ENCODE measurements at regions of chr12 and their contacts with region 1.

Region 1: GRCh38 chr12:120457133-120457532 is 10.9 kb downstream of the GATC start:
- DNase-seq: no peak
- H3K4me3 ChIP-seq: no peak overlapping the region
- CTCF ChIP-seq: peak; percentile 19

Region 2: GRCh38 chr12:120381752-120382419 is 75.2 kb before region 1 on chr12:
- CTCF ChIA-PET with region 1: no interaction called
- POLR2A ChIA-PET with region 1: no interaction called
- DNase-seq: no peak
- H3K4me3 ChIP-seq: no peak overlapping the region
- CTCF ChIP-seq: no peak

Region 3: DNA sequence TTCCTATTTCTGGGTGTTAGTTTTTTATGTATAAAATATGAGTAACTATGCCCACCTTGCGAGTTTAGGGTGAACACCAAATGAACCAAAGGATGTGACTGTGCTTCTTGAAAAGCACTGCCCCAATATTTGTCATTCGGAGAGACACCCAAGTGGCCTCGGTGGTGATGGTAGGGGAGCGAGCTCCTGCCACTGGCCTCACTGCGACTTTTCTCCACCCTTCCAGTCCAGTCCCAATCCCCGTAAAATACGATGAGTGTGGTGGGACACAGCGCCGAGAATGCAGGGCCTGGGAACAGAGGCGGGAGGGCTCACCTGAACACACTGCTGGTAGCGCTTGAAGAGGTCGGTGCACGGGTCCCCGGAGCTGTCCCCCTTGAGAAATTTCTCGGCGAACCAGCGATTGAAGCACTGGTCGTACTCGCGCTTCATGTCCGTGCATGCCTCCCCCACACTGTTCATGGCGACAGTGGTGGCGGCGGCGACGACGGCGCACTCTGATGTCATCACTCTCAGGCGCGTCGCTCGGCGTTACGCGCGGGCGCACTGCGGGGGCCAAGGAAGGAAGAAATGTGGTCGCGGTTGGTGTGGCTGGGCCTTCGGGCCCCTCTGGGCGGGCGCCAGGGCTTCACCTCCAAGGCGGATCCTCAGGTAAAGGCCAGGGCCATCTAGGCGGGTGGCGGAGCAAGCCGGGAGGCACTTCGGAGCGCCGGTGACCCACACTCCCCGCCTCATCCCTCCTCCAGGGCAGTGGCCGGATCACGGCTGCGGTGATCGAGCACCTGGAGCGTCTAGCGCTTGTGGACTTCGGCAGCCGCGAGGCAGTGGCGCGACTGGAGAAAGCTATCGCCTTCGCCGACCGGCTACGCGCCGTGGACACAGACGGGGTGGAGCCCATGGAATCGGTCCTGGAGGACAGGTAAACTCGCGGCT is 11.0 kb before region 1 on chr12 and contains the starts of genes GATC and TRIAP1:
- CTCF ChIA-PET with region 1: interaction called, 242 read pairs
- POLR2A ChIA-PET with region 1: interaction called, 3 read pairs
- DNase-seq: no peak
- H3K4me3 ChIP-seq: peak within 1 kb of the TSS; percentile 100
- CTCF ChIP-seq: no peak